PC-9 (cell line): ENCODE measurements at regions of chr15 and their contacts with region 1.

Region 1: GRCh38 chr15:88657326-88658069 is 18.7 kb downstream of the ISG20 start:
- DNase-seq: no peak
- H3K4me3 ChIP-seq: no peak overlapping the region
- H3K27ac ChIP-seq: no peak overlapping the region
- H3K4me1 ChIP-seq: peaks cover 21% of the 10 kb centered on the region
- H3K27me3 ChIP-seq: no peaks in the 10 kb centered on the region
- CTCF ChIP-seq: peak; percentile 87

Region 2: GRCh38 chr15:88476635-88477060 is 180.8 kb before region 1 on chr15:
- CTCF ChIA-PET with region 1: no interaction called
- POLR2A ChIA-PET with region 1: no interaction called
- intact Hi-C with region 1: no loop called
- DNase-seq: no peak
- H3K4me3 ChIP-seq: no peak overlapping the region
- H3K27ac ChIP-seq: no peak overlapping the region
- H3K4me1 ChIP-seq: no peaks in the 10 kb centered on the region
- H3K27me3 ChIP-seq: no peaks in the 10 kb centered on the region
- CTCF ChIP-seq: peak; percentile 68

Region 3: GRCh38 chr15:88620995-88621772 is 36.3 kb before region 1 on chr15 and contains the start of gene AEN:
- CTCF ChIA-PET with region 1: no interaction called
- POLR2A ChIA-PET with region 1: no interaction called
- intact Hi-C with region 1: no loop called
- DNase-seq: peak; percentile 86 to 93
- H3K4me3 ChIP-seq: peak within 1 kb of the TSS; percentile 84
- H3K27ac ChIP-seq: peak within 1 kb of the TSS; percentile 44
- H3K4me1 ChIP-seq: peaks cover 19% of the 10 kb centered on the region
- H3K27me3 ChIP-seq: no peaks in the 10 kb centered on the region
- CTCF ChIP-seq: no peak
- total RNA-seq, gene AEN: 6.7 and 7.8 TPM in 2 replicates

Region 4: DNA sequence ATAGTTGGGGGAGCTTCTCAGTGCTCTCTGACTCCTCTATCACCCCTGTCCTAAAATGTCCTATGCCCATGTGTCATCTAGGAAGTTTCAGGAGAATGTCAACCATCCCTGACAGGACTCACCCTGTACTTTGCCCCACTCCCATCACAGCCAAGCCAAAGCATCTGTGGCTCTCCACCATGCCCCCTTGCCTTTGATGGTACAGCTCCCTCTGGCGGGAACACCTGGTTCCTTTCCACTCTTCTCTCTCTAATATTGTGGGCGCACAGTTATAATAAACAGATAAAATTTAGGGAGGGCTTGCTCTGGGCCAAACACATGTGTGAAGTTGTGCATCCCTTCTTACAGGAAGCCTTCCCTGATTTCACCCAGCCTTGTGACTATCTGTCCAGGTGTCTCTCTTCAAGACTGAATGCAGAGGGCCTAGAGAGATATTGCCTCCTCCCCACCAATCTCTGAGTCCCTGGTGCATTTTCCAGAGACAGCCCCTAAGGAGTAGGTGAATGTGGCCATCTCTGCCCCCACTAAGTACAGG is 44.1 kb after region 1 on chr15:
- CTCF ChIA-PET with region 1: no interaction called
- POLR2A ChIA-PET with region 1: no interaction called
- intact Hi-C with region 1: loop called (anchors 2 kb)
- DNase-seq: peak in 1 of 2 experiments; percentile 14
- H3K4me3 ChIP-seq: no peak overlapping the region
- H3K27ac ChIP-seq: no peak overlapping the region
- H3K4me1 ChIP-seq: no peaks in the 10 kb centered on the region
- H3K27me3 ChIP-seq: peaks cover 71% of the 10 kb centered on the region
- CTCF ChIP-seq: peak; percentile 59

Region 5: GRCh38 chr15:88810434-88810995 is 153.0 kb after region 1 on chr15:
- CTCF ChIA-PET with region 1: no interaction called
- POLR2A ChIA-PET with region 1: no interaction called
- intact Hi-C with region 1: no loop called
- DNase-seq: no peak
- H3K4me3 ChIP-seq: no peak overlapping the region
- H3K27ac ChIP-seq: no peak overlapping the region
- H3K4me1 ChIP-seq: no peaks in the 10 kb centered on the region
- H3K27me3 ChIP-seq: peaks cover 30% of the 10 kb centered on the region
- CTCF ChIP-seq: no peak

Region 6: GRCh38 chr15:88834211-88834812 is 176.8 kb after region 1 on chr15:
- CTCF ChIA-PET with region 1: no interaction called
- POLR2A ChIA-PET with region 1: no interaction called
- intact Hi-C with region 1: loop called (anchors 1 kb)
- DNase-seq: no peak
- H3K4me3 ChIP-seq: no peak overlapping the region
- H3K27ac ChIP-seq: no peak overlapping the region
- H3K4me1 ChIP-seq: no peaks in the 10 kb centered on the region
- H3K27me3 ChIP-seq: peaks cover 15% of the 10 kb centered on the region
- CTCF ChIP-seq: peak; percentile 62

Region 7: GRCh38 chr15:88897456-88898194 is 240.1 kb after region 1 on chr15:
- CTCF ChIA-PET with region 1: no interaction called
- POLR2A ChIA-PET with region 1: no interaction called
- intact Hi-C with region 1: loop called (anchors 2 kb)
- DNase-seq: peak; percentile 62 to 84
- H3K4me3 ChIP-seq: no peak overlapping the region
- H3K27ac ChIP-seq: no peak overlapping the region
- H3K4me1 ChIP-seq: 0 out of 2 replicates have a peak, but pooled peaks cover 3% of the 10 kb centered on the region
- H3K27me3 ChIP-seq: peaks cover 19% of the 10 kb centered on the region; the same call in 1 of the 2 replicates
- CTCF ChIP-seq: peak; percentile 57

Region 8: DNA sequence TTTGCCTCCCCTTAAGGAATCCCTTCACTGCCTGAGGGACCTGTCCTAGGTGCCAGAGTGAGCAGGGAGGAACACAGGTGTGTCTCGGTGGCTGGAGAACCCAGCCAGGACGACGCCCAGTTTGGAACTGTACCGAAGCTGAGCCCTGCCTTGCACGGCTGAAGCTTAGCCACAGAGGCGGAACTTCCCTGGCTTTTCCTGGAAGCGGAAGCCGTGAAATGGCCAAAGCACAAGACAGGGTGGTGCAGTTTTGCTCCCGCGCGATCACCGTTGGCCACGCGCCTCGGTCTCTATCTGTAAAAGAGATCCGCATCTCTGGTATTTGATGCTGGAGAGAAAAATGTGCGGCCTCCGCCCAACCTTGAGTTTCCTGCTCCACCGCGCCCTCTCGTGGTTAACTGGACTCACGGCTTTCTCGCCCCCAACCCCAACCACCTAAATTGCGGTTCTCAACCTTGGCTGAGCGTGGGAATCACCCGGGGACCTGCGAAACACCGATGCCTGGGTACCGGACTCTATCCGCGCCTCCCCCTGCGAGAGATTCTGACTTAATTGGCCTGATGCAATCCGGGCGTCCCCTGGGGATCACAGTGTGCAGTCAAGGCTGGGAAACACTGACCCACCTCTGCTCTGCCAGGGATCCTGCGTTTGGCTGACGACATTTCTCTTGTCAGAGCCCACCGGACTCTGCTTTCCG is 360.0 kb after region 1 on chr15:
- CTCF ChIA-PET with region 1: no interaction called
- POLR2A ChIA-PET with region 1: no interaction called
- intact Hi-C with region 1: loop called (anchors 10 kb)
- DNase-seq: peak; percentile 64 to 79
- H3K4me3 ChIP-seq: peak overlapping the region; percentile 42; the same call in 1 of the 2 replicates
- H3K27ac ChIP-seq: 0 out of 2 replicates have a peak overlapping the region, but pooled peaks have one; percentile 44
- H3K4me1 ChIP-seq: peaks cover 15% of the 10 kb centered on the region
- H3K27me3 ChIP-seq: no peaks in the 10 kb centered on the region
- CTCF ChIP-seq: peak; percentile 83

Region 9: DNA sequence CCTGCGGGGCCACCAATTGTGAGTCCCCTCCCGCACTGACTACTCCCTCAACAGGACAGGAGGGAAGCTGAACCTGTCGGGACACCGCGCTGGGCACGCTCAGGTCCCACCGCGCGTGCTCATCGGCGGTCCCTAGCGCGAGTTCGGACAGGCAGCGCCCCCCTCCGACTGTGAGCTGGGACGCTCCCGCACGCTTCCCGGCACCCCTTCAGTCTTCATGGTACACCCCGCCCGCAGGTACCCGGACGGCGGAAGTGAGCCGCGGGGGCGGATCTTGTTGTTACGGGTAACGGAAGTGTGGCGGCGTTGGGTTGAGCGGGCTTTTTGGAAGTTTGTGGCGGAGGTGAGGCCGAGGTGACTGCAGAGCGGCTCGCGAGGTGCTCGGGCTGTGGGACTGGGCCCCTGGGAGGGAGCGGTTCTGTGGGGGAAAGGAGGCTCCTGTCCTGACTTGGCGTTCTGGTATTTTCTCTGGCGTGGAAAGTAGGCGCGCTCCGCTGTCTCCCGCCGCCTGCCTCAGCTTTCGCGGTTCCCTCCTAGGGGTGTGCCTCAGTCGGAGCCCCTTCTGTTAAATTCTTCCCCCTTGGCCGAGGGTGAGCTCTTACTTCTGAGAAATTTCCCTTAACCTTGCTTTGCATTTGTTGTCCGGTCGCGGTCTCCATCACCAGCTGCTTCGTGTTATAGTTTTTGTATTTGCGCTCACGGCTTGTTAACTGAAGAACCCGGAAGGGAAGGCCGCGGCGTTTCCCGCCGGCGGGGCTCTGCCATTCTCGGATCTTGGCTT is 586.4 kb after region 1 on chr15 and contains the start of gene FANCI:
- CTCF ChIA-PET with region 1: no interaction called
- POLR2A ChIA-PET with region 1: no interaction called
- intact Hi-C with region 1: loop called (anchors 5 kb)
- DNase-seq: peak; percentile 82 to 94
- H3K4me3 ChIP-seq: peak within 1 kb of the TSS; percentile 89
- H3K27ac ChIP-seq: no peak within 1 kb of the TSS
- H3K4me1 ChIP-seq: peaks cover 16% of the 10 kb centered on the region
- H3K27me3 ChIP-seq: no peaks in the 10 kb centered on the region
- CTCF ChIP-seq: peak; percentile 52; the same call in 1 of the 2 replicates
- total RNA-seq, gene FANCI: 102 and 126 TPM in 2 replicates